Transverse colon (tissue), 4 donors: ENCODE measurements at regions of chr3 and their contacts with region 1.

Region 1: GRCh38 chr3:48151058-48151806 is 37.0 kb downstream of the CDC25A start:
- DNase-seq: peak; percentile 80
- H3K4me3 ChIP-seq: no peak overlapping the region
- H3K27ac ChIP-seq: peak overlapping the region; percentile 30 to 40 (median 35)
- H3K4me1 ChIP-seq: peaks cover 0 to 9% (median 4%) of the 10 kb centered on the region in 4 donors
- H3K27me3 ChIP-seq: no peaks in the 10 kb centered on the region
- CTCF ChIP-seq: peak; percentile 74 to 85 (median 74)
- EP300 ChIP-seq: no peak
- POLR2A ChIP-seq: no peak

Region 2: DNA sequence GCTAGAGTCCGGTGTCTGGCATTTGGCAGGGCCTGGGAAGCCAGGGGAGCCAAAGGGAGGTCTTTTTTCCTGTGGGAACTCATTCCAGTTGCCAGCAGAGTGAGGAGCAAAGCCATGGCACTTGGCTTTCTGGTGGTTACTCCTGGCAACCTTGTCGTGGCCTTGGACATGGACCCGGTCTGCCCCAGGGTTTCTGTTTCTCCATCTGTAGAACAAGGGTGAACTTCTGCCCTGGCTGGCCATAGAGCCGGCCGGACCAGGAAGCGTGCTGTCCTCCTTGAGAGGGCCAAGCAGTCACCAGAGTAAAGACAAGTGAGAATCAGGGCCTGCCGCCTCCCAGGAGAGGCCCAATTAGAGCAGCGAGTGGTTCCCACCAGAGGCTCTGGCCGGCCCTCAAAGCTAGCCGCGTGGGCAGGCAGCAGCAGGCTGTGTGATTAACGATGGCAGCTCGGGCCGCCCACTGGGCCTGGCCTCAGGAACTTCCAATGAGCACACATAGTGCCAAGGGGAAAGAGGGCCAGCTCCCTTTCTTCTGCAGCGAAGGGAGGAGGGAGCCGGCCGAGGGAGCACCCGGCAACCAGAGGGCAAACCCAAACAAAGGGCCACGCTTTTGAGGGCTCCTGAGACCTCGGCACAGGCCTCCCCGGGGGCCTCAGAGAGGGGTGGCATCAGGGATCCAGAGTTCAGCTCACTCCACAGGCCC is 608.6 kb before region 1 on chr3:
- in situ Hi-C with region 1: loop called in 1 of 4 experiments (anchors 25 kb)
- intact Hi-C with region 1: no loop called
- DNase-seq: peak; percentile 14
- H3K4me3 ChIP-seq: no peak overlapping the region
- H3K27ac ChIP-seq: peak overlapping the region in 1 of 4 donors; percentile 24
- H3K4me1 ChIP-seq: peaks cover 0 to 9% (median 2%) of the 10 kb centered on the region in 4 donors
- H3K27me3 ChIP-seq: no peaks in the 10 kb centered on the region
- CTCF ChIP-seq: no peak
- EP300 ChIP-seq: no peak
- POLR2A ChIP-seq: no peak

Region 3: DNA sequence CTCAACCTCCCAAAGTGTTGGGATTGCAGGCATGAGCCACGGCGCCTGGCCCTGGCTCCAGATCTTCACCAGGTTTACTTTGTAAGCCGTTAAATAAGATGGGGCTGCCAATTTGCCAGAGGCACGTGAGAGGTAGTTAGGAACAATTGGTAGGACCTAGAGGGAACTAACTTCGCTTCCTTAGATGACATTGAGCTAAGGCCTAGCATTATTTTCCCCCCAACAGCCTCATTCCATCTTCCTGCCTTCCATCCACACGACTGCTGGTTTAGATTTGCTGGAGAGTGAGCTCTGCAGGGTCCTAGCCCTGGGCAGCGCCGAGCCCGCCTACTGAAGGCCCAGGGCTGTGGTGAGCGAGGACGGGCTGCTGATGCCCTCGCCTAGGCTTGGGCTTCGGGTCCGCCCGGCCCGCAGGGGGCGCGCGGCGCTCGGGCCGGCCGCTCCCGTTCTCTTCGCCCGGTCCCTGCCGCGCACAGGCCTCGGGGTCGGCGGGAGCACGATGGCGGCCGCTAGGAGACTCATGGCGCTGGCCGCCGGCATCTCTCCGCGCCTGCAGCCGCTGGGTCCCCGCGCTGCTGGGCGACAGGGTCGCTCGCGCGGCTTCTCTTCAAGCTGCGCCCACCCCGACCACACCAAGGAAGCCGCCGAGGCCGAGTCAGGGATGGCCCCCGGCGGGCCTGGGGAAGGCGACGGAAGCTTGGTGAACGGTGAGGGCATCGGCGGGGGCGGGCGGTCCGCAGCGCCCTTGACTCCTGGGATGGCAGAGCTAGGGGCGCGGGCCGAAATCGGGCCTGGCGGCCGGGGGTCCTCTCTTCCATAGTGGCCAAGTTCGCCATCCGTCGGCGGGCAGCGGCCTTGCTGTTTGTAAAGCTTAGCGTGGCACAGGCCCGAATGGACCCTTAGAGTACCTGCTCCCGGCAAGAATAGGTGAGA is 326.4 kb before region 1 on chr3:
- in situ Hi-C with region 1: loop called in 3 of 4 experiments (anchors 10 to 25 kb)
- intact Hi-C with region 1: loop called (anchors 5 kb)
- DNase-seq: peak; percentile 82
- H3K4me3 ChIP-seq: peak overlapping the region; percentile 90 to 99 (median 96)
- H3K27ac ChIP-seq: peak overlapping the region; percentile 85 to 89 (median 88)
- H3K4me1 ChIP-seq: peaks cover 8 to 20% (median 20%) of the 10 kb centered on the region in 4 donors
- H3K27me3 ChIP-seq: no peaks in the 10 kb centered on the region
- CTCF ChIP-seq: peak; percentile 31 to 87 (median 73)
- EP300 ChIP-seq: no peak
- POLR2A ChIP-seq: peak; percentile 26

Region 4: GRCh38 chr3:47836986-47837385 is 314.2 kb before region 1 on chr3:
- in situ Hi-C with region 1: loop called (anchors 5 to 25 kb)
- intact Hi-C with region 1: loop called (anchors 5 kb)
- DNase-seq: no peak
- H3K4me3 ChIP-seq: no peak overlapping the region
- H3K27ac ChIP-seq: no peak overlapping the region
- H3K4me1 ChIP-seq: no peaks in the 10 kb centered on the region
- H3K27me3 ChIP-seq: no peaks in the 10 kb centered on the region
- CTCF ChIP-seq: no peak
- EP300 ChIP-seq: no peak
- POLR2A ChIP-seq: no peak

Region 5: DNA sequence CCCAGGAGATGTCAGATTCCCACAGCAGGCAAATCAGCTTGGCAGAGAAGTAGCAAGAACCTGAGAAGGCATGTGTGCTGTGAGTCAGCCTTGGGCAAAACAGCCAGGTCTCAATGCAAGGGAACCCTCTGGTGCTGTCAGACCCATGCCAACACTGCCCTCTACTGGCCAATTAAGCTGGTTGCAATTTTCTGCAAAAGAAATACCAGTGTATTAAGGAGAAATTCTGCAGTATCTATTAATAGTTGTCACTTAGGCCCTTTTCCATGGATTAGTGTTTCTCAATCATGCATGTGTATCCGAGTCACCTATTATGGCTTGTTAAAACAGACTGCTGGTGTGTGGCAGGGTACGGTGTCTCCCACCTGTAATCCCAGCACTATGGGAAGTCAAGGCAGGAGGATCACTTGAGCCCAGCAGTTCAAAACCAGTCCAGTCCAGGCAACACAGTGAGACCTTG is 161.2 kb before region 1 on chr3:
- in situ Hi-C with region 1: no loop called
- intact Hi-C with region 1: loop called (anchors 10 kb)
- DNase-seq: peak; percentile 72
- H3K4me3 ChIP-seq: no peak overlapping the region
- H3K27ac ChIP-seq: no peak overlapping the region
- H3K4me1 ChIP-seq: peaks cover 0 to 13% (median 0%) of the 10 kb centered on the region in 4 donors
- H3K27me3 ChIP-seq: no peaks in the 10 kb centered on the region
- CTCF ChIP-seq: peak; percentile 84 to 92 (median 85)
- EP300 ChIP-seq: no peak
- POLR2A ChIP-seq: no peak

Region 6: DNA sequence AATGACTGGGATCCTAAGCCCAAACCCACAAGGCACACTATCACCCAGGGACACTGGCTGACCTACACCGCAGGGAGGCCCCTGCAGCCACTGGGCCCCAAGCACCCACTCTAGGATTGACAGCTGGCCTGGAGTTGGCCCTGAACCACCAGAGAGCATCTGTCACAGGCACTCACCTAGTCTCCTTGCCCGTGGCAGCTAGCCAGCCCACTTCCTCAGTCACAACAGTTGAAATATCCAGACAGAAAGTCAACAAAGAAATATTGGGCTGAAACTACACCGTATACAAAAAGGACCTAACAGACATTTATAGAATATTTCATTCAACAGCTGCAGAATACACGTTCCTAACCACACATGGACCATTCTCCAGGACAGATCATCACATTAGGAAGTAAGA is 187.4 kb after region 1 on chr3:
- in situ Hi-C with region 1: no loop called
- intact Hi-C with region 1: no loop called
- DNase-seq: no peak
- H3K4me3 ChIP-seq: no peak overlapping the region
- H3K27ac ChIP-seq: no peak overlapping the region
- H3K4me1 ChIP-seq: peaks cover 0 to 11% (median 8%) of the 10 kb centered on the region in 4 donors
- H3K27me3 ChIP-seq: no peaks in the 10 kb centered on the region
- CTCF ChIP-seq: no peak
- EP300 ChIP-seq: no peak
- POLR2A ChIP-seq: no peak

Region 7: GRCh38 chr3:48435774-48436476 is 284.7 kb after region 1 on chr3:
- in situ Hi-C with region 1: no loop called
- intact Hi-C with region 1: no loop called
- DNase-seq: peak; percentile 91
- H3K4me3 ChIP-seq: no peak overlapping the region
- H3K27ac ChIP-seq: peak overlapping the region; percentile 10 to 81 (median 66)
- H3K4me1 ChIP-seq: peaks cover 19 to 45% (median 32%) of the 10 kb centered on the region in 4 donors
- H3K27me3 ChIP-seq: no peaks in the 10 kb centered on the region
- CTCF ChIP-seq: peak; percentile 98 to 100 (median 100)
- EP300 ChIP-seq: no peak
- POLR2A ChIP-seq: no peak

Region 8: DNA sequence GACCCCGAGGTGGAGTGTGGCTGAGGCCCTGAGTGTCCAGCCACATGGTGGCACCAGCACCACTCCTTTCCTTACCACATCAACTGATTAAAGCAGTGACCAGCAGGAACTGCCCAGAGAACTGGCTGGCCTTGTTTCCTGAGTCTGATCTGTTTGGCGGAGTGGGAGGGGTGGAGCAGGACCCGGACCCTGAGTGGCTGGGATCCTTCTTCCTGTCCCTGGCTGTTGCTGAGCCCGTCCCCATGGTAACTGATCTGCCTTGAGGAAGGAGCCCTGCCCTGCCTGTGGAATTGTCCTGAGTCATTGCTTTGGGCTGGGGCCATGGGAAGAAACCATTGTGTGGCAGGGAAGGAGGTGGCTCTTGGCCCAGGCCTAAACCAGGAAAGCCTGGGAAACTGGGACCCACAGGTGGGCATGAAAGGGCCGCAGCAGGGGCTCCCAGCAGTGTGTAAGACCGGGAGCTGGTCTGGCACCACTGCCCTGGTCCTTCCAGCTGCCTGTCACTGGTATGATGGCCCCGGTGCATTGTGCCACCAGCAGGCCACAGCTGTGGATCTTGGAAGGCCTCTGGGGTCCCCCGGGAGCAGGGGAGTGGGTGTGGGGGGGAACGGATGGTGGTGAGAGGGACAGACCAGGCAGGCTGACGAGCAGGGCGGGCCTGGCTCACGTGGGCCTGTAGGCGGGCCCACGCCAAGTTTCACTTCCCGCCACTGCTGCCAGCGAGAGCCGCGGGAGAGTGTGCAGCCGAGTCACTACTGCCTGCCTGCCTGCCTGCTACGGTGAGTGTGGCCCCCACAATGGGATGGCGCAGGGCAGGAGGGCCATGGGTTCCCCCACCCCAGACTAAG is 314.5 kb after region 1 on chr3:
- in situ Hi-C with region 1: no loop called
- intact Hi-C with region 1: no loop called
- DNase-seq: peak; percentile 95
- H3K4me3 ChIP-seq: peak overlapping the region; percentile 37 to 52 (median 46)
- H3K27ac ChIP-seq: peak overlapping the region; percentile 96 to 100 (median 99)
- H3K4me1 ChIP-seq: peaks cover 42 to 60% (median 51%) of the 10 kb centered on the region in 4 donors
- H3K27me3 ChIP-seq: no peaks in the 10 kb centered on the region
- CTCF ChIP-seq: peak; percentile 53 to 83 (median 64)
- EP300 ChIP-seq: no peak
- POLR2A ChIP-seq: peak; percentile 94

Region 9: GRCh38 chr3:49199239-49199899 is 1048.1 kb after region 1 on chr3:
- in situ Hi-C with region 1: no loop called
- intact Hi-C with region 1: no loop called
- DNase-seq: peak; percentile 74
- H3K4me3 ChIP-seq: peak overlapping the region in 3 of 4 donors; percentile 10 to 37 (median 22)
- H3K27ac ChIP-seq: peak overlapping the region in 3 of 4 donors; percentile 48 to 74 (median 67)
- H3K4me1 ChIP-seq: no peaks in the 10 kb centered on the region
- H3K27me3 ChIP-seq: no peaks in the 10 kb centered on the region
- CTCF ChIP-seq: no peak
- EP300 ChIP-seq: no peak
- POLR2A ChIP-seq: no peak